GM10248 (cell line): ENCODE measurements at regions of chr2 and their contacts with region 1.

Region 1: GRCh38 chr2:157302492-157303099 is 23.0 kb downstream of the ERMN start:
- DNase-seq: peak; percentile 34
- CTCF ChIP-seq: peak; percentile 61

Region 2: DNA sequence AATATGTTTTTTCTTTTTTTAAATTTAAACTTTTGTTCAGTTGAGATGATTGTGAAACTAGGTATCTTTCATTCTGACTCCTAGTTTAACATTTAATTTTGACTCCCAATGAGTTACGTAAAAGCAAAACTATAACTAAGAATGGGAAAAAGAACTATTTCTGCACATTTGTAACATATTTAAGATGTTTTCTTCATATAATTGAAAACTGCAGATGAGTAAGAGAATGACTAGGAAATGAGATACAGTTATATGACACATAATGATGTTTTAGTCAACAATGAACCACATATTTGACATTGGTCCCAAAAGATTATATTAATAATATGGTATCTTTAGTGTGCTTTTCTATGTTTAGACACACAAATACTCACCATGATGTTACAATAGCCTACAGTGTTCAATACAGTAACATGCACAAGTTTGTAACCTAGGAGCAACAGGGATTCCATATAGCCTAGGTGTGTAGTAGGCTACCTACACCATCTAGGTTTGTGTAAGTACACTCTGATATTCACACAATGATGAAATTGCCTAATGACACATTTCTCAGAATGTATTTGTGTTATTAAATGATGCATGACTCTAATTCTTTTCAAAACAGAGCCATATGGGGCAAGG is 10.4 kb after region 1 on chr2:
- CTCF ChIA-PET with region 1: interaction called, 24 read pairs
- POLR2A ChIA-PET with region 1: no interaction called
- DNase-seq: no peak
- CTCF ChIP-seq: no peak

Region 3: DNA sequence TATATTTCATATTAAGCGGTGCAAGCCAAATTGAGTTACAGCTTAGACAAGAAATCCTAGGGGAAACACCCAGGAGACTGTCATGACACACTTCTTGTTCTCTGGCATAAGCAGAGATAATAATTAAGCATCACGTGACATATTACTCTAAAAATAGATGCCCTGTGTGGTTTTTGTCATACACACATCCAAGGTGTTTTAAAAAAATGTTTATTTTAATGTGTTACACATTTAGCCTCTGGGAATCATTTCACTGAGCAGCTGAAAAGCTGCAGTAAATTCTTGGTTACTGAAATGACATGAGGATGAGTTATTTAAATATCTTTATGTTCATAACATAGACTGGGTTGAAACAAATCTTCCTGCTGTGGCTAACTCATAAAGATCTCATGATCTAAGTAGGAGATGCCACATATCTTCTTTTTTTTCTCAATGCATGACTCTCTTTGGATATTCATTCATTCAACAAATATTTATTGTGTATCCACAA is 61.1 kb after region 1 on chr2:
- CTCF ChIA-PET with region 1: no interaction called
- POLR2A ChIA-PET with region 1: no interaction called
- DNase-seq: no peak
- CTCF ChIP-seq: no peak

Region 4: DNA sequence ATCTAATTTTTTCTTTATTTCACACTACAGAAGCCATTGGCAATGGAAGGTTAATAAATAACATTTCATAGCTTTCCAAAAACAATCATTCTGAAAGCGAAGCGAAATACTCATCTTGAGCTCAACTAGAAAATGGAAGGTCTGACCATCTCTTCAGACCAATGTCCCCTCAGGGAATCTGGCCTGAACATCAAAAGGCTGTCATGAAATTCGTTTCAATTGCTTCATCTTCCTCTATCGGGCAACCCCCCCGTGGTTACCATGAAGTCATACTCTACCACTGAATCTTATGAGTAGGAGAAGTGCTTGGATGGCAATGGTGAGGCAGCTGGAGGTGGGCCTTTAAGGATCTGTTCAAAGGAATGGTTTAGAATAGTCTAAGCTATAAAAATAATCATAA is 164.2 kb after region 1 on chr2:
- CTCF ChIA-PET with region 1: no interaction called
- POLR2A ChIA-PET with region 1: no interaction called
- DNase-seq: peak; percentile 20
- CTCF ChIP-seq: no peak

Region 5: GRCh38 chr2:157492189-157492773 is 189.7 kb after region 1 on chr2:
- CTCF ChIA-PET with region 1: interaction called, 63 read pairs
- POLR2A ChIA-PET with region 1: no interaction called
- DNase-seq: peak; percentile 65
- CTCF ChIP-seq: peak; percentile 67

Region 6: DNA sequence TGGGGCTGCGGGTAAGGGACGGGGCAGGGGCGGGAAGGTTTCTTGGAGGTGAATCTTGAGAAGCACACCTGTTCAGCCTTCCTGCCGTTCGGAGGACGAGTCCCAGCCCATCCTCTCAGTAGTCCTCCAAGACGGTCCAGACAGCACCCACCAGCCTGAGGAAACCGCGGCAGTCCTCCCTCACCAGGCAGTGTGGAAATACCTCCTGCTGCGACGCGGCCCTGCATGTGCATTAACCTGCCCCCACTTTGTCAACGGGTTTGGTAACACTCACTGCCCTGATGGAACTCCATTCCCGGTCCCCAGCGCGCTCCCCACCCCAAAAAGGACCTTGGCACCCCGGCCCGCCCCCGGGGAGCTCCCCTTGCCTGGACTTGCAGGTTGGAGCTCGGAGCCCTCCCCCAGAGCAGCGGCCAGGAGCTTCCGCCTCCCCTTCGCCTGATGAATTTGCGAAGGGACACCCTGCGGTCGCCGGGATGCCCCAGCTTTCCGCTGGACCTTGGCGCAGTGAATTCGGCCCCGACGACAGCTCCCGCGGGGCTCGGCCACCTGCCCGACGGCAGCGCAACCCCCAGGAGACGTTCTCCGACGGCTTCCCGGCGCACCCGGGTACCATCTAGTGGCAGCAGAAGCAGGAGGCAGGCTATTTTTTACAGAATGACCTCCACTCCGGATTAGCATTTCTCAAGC is 294.5 kb after region 1 on chr2:
- CTCF ChIA-PET with region 1: interaction called, 22 read pairs
- POLR2A ChIA-PET with region 1: no interaction called
- DNase-seq: peak; percentile 50
- CTCF ChIP-seq: peak; percentile 57

Region 7: GRCh38 chr2:158006961-158007719 is 704.5 kb after region 1 on chr2:
- CTCF ChIA-PET with region 1: interaction called, 27 read pairs
- POLR2A ChIA-PET with region 1: no interaction called
- DNase-seq: no peak
- CTCF ChIP-seq: no peak

Region 8: DNA sequence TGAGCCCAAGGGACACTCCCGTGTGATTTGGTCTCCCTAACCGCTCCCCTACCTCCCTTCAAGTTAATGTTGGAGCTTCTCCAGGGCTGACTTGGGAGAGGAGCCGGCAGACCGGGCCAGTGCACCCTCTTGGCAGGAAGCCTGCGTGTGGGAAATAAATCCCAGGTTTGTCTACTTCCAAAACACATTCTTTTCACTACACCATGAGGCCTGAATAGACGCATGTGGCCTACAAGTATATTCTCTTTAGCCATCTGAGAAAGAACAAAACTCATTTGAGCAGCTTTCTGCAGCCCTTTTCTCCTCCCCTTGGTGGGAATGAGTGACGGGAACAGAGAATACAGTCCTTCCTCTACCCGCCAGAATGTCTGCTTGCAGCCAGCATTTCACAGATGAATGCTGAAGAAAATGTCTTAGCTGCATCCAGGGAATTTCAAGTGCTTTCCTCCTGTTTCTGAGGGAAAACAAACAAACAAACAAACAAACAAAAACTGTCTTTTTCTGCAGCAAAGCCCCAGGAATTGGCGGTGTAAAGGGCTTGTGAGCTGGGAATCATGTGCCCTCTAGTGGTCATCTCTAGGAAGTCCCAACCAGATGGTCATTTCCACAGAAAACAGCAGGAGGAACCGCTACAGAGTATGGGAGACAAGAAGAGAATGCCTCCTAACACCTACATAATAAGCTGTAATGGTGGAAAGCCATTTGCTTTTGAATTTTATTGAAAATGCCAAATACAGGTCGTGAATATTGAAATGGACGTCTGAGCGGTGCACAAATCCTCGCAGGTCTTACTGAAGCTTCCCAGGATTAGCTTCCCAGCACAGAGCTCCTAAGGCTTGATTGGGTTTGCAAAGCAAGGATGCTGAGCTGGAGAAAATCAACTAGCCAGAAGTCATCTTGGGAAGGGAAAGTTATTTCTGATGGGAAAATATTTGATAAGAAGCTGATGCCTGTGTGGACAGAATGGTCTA is 1451.3 kb after region 1 on chr2:
- CTCF ChIA-PET with region 1: interaction called, 11 read pairs
- POLR2A ChIA-PET with region 1: no interaction called
- DNase-seq: peak; percentile 70
- CTCF ChIP-seq: peak; percentile 81